ENCODE measurements at regions of chr11 and their contacts with region 1.

Region 1: DNA sequence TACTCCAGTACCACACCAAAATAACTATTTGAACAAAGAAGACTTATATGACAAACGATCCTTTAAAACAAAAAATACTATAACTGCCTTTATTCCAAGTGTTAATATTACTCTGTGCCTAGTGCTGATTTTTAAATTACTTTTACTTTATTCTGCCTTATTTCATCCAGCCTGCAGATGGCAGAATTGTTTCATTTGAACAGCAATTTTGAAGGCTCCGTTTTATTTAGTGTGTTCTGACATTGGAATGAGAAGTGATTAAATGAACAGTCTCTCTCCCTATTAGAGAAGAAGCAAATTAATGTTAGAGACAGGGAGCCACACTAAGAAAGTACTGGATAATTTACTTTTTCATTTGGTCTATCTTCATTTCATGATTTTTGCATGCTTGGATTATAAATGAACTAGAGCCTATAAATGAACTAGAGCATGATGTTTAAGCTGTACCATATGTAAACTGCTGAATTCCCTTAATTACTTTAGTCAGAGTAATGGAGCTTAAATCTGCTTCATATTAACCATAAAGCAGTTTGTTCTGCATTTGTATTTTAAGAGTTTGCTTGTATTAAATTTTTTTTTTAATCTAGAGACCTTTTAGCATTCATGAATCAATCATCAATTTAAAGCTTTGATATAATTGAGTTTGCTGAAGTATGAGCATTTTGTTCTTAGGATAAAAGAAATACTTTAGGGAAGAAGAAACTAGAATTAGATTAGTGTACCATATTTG is 9.8 kb downstream of the PDHX start:
- DNase-seq: peak in 1 of 2 experiments; percentile 47
- H3K4me3 ChIP-seq: no peak overlapping the region
- H3K4me3 Mint-ChIP-seq: no peak overlapping the region
- H3K27ac Mint-ChIP-seq: no peak overlapping the region
- H3K4me1 ChIP-seq: peaks cover 50% of the 10 kb centered on the region
- H3K4me1 Mint-ChIP-seq: peaks cover 41% of the 10 kb centered on the region
- H3K27me3 ChIP-seq: no peaks in the 10 kb centered on the region
- H3K27me3 Mint-ChIP-seq: no peaks in the 10 kb centered on the region
- CTCF ChIP-seq: peak; percentile 51 to 73

Region 2: DNA sequence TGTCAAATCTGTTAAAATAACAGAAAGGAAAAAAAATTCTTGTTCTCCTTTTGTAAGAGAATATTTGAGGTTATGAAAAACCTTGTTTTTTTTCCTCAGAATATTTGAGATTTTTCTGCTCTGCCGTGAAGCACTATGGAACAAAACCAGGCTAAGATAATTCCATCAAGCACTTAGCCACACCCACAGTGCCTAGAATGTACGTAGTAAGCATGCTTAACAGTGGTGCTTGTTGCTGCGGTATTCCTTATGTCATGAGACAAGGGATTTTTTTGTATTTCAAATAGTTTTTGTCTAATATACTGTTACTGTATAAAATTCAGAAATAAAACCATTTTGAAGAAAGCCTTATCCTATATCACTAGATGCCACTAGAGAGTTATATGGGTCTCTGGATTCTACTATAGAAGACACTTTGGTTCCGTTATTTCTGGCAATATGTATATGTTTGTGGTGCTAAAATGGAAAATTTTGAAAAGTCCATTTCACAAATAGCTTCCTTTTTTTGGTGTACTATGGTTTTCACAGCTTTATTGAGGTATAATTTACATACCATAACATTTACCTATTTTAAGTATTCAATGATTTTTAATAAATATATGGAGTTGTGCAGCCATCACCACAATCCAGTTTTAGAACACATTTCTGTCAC is 13.9 kb after region 1 on chr11:
- CTCF ChIA-PET with region 1: no interaction called
- POLR2A ChIA-PET with region 1: no interaction called
- intact Hi-C with region 1: no loop called
- DNase-seq: no peak
- H3K4me3 ChIP-seq: no peak overlapping the region
- H3K4me3 Mint-ChIP-seq: no peak overlapping the region
- H3K27ac Mint-ChIP-seq: no peak overlapping the region
- H3K4me1 ChIP-seq: no peaks in the 10 kb centered on the region; the same call in 1 of the 2 replicates
- H3K4me1 Mint-ChIP-seq: peaks cover 7% of the 10 kb centered on the region
- H3K27me3 ChIP-seq: no peaks in the 10 kb centered on the region
- H3K27me3 Mint-ChIP-seq: no peaks in the 10 kb centered on the region
- CTCF ChIP-seq: no peak

Region 3: GRCh38 chr11:34977089-34977906 is 51.0 kb after region 1 on chr11:
- CTCF ChIA-PET with region 1: no interaction called
- POLR2A ChIA-PET with region 1: no interaction called
- intact Hi-C with region 1: loop called (anchors 5 kb)
- DNase-seq: no peak
- H3K4me3 ChIP-seq: no peak overlapping the region
- H3K4me3 Mint-ChIP-seq: no peak overlapping the region
- H3K27ac Mint-ChIP-seq: no peak overlapping the region
- H3K4me1 ChIP-seq: peaks cover 9% of the 10 kb centered on the region; the same call in 1 of the 2 replicates
- H3K4me1 Mint-ChIP-seq: peaks cover 23% of the 10 kb centered on the region
- H3K27me3 ChIP-seq: no peaks in the 10 kb centered on the region
- H3K27me3 Mint-ChIP-seq: no peaks in the 10 kb centered on the region
- CTCF ChIP-seq: no peak

Region 4: DNA sequence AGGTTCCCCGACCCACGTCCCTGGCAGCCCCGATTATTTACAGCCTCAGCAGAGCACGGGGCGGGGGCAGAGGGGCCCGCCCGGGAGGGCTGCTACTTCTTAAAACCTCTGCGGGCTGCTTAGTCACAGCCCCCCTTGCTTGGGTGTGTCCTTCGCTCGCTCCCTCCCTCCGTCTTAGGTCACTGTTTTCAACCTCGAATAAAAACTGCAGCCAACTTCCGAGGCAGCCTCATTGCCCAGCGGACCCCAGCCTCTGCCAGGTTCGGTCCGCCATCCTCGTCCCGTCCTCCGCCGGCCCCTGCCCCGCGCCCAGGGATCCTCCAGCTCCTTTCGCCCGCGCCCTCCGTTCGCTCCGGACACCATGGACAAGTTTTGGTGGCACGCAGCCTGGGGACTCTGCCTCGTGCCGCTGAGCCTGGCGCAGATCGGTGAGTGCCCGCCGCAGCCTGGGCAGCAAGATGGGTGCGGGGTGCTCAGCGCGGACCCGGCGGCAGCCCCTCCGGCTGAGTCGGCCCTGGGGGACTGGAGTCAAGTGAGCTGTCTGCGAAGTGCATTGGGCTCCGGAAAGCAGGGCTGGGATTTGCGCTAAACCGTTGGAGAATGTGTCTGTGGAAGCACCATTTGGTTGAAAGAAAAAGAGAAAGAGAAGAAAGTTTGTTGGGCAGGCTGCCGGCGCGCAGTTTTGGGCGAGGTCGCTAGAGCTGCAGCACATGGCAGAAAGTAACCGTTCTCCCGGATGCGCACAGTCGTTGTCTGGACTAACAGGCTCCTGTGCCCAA is 212.9 kb after region 1 on chr11 and contains the start of gene CD44:
- CTCF ChIA-PET with region 1: interaction called, 3 read pairs
- POLR2A ChIA-PET with region 1: no interaction called
- intact Hi-C with region 1: loop called (anchors 5 kb)
- DNase-seq: peak in 1 of 2 experiments; percentile 33
- H3K4me3 ChIP-seq: peak within 1 kb of the TSS; percentile 79
- H3K4me3 Mint-ChIP-seq: peak within 1 kb of the TSS; percentile 53
- H3K27ac Mint-ChIP-seq: peak within 1 kb of the TSS; percentile 16
- H3K4me1 ChIP-seq: peaks cover 5% of the 10 kb centered on the region; the same call in 1 of the 2 replicates
- H3K4me1 Mint-ChIP-seq: no peaks in the 10 kb centered on the region
- H3K27me3 ChIP-seq: 0 out of 2 replicates have a peak, but pooled peaks cover 2% of the 10 kb centered on the region
- H3K27me3 Mint-ChIP-seq: peaks cover 6% of the 10 kb centered on the region
- CTCF ChIP-seq: no peak
- total RNA-seq, gene CD44: 50.4 and 61.4 TPM in 2 replicates

Region 5: GRCh38 chr11:35237860-35238715 is 311.8 kb after region 1 on chr11:
- CTCF ChIA-PET with region 1: no interaction called
- POLR2A ChIA-PET with region 1: no interaction called
- intact Hi-C with region 1: loop called (anchors 1 kb)
- DNase-seq: peak; percentile 51 to 71
- H3K4me3 ChIP-seq: no peak overlapping the region
- H3K4me3 Mint-ChIP-seq: no peak overlapping the region
- H3K27ac Mint-ChIP-seq: peak overlapping the region; percentile 11
- H3K4me1 ChIP-seq: peaks cover 4% of the 10 kb centered on the region; the same call in 1 of the 2 replicates
- H3K4me1 Mint-ChIP-seq: peaks cover 8% of the 10 kb centered on the region
- H3K27me3 ChIP-seq: no peaks in the 10 kb centered on the region
- H3K27me3 Mint-ChIP-seq: no peaks in the 10 kb centered on the region
- CTCF ChIP-seq: peak; percentile 72 to 85

Region 6: DNA sequence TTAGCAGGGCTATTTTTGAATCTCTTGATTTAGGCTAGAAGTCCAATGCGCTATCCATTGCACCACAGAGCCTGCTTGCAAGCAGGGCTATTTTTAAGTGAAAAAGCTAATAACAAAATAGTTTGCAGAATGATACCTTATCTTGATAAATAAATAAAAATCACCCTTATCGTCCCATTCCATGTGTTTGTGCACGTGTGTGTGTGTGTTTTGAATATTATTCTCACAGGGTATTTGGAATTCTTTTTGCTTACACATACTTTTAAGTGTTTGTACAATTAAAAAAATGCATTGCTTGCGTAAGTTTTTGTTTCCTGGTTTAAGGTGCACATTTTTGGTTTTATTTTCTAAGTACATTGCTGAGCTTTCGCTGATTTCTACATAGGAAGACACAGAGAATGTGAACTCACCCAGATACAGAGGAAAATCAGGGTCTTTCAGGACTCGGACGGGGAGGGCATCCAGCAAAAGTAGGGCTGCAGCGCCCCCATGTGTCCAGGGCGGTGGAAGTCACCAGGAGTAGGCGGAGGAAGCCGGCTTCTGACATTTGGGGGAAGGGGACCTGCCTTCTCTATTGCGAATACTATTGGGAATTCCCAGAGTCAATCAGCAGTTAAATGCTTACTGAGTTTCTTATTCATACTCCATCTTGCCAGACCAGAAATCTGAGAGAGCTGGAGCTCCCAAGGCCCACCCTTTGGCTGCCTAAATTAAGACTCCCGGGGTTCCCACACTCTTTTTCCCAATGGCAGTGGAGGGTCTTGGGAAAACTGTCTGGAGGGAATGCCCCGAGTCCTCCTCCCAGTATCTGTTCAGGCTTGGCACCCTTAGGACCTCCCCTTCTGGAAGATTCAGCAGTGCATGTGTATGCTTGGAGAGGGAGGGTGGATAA is 465.9 kb after region 1 on chr11:
- CTCF ChIA-PET with region 1: interaction called, 9 read pairs
- POLR2A ChIA-PET with region 1: no interaction called
- intact Hi-C with region 1: loop called (anchors 1 kb)
- DNase-seq: peak; percentile 81 to 94
- H3K4me3 ChIP-seq: no peak overlapping the region
- H3K4me3 Mint-ChIP-seq: peak overlapping the region; percentile 12
- H3K27ac Mint-ChIP-seq: no peak overlapping the region
- H3K4me1 ChIP-seq: peaks cover 24% of the 10 kb centered on the region; the same call in 1 of the 2 replicates
- H3K4me1 Mint-ChIP-seq: peaks cover 12% of the 10 kb centered on the region
- H3K27me3 ChIP-seq: no peaks in the 10 kb centered on the region
- H3K27me3 Mint-ChIP-seq: no peaks in the 10 kb centered on the region
- CTCF ChIP-seq: peak; percentile 94 to 95